HepG2 (cell line): ENCODE measurements at regions of chr9 and their contacts with region 1.

Region 1: DNA sequence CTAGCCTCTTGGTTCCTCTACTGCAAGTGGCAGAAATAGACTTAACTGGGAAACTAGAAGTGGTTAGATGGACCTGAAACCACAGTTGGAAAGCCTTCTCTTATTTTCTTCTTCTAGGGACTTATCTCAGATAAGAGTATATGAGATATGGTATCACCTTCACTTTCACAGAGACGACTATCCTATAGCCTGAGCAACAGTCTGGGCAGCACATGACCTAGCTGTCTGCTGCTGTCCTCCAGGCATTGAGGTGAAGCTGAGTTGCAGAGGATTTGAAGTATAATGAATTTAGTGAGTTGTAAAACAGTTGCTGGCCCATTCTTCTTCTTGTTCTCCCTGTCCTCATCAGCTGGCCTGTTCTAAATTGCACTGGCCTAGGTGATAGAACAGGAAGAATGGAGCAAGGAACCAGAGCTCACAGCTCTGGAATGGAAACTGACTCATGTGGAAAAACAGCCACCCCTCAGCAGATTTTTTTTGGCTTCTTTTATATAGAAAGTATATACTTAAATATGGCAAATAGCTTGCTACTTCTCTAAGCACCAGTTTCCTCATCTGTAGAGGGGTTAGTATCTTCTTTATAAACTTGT is 27.8 kb downstream of the RECK start:
- DNase-seq: no peak
- ATAC-seq: no peak
- H3K4me3 ChIP-seq: no peak overlapping the region
- H3K27ac ChIP-seq: no peak overlapping the region
- H3K4me1 ChIP-seq: no peaks in the 10 kb centered on the region
- H3K27me3 ChIP-seq: no peaks in the 10 kb centered on the region
- CTCF ChIP-seq: no peak
- EP300 ChIP-seq: no peak
- POLR2A ChIP-seq: no peak
- RAD21 ChIP-seq: no peak

Region 2: GRCh38 chr9:36008774-36009300 is 55.7 kb before region 1 on chr9:
- CTCF ChIA-PET with region 1: no interaction called
- POLR2A ChIA-PET with region 1: no interaction called
- in situ Hi-C with region 1: loop called (anchors 10 kb)
- intact Hi-C with region 1: no loop called
- DNase-seq: peak; percentile 74
- ATAC-seq: peak; percentile 97
- H3K4me3 ChIP-seq: no peak overlapping the region
- H3K27ac ChIP-seq: no peak overlapping the region
- H3K4me1 ChIP-seq: peaks cover 4% of the 10 kb centered on the region; the same call in 1 of the 2 replicates
- H3K27me3 ChIP-seq: peaks cover 0 to 2% of the 10 kb centered on the region in 2 experiments; a peak in 1 of 5 replicates
- CTCF ChIP-seq: peak; percentile 97
- EP300 ChIP-seq: no peak
- POLR2A ChIP-seq: no peak
- RAD21 ChIP-seq: peak; percentile 73

Region 3: DNA sequence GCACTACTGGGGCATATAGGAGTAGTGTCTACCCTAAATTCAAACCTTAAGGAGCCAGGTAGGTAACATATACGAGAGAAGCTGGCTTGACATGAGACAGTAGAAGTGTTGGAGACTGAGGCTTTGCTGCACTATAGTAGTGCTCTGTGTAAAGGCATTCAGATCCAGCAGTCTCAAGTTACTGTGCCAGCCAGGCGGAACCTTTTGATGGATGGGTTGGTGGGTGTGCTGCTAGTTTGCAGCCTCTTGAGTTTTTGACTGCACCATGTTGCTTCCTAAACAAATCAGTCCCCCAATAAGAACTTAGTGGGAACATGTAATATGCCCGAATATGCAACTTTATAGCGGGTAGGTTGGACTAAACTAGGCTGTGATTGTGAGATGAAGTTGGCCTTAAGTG is 127.7 kb after region 1 on chr9:
- CTCF ChIA-PET with region 1: no interaction called
- POLR2A ChIA-PET with region 1: no interaction called
- in situ Hi-C with region 1: no loop called
- intact Hi-C with region 1: no loop called
- DNase-seq: no peak
- ATAC-seq: no peak
- H3K4me3 ChIP-seq: peak overlapping the region; percentile 84 to 86 (median 85)
- H3K27ac ChIP-seq: no peak overlapping the region
- H3K4me1 ChIP-seq: peaks cover 36% of the 10 kb centered on the region
- H3K27me3 ChIP-seq: no peaks in the 10 kb centered on the region; a peak in 1 of 5 replicates
- CTCF ChIP-seq: no peak
- EP300 ChIP-seq: no peak
- POLR2A ChIP-seq: no peak
- RAD21 ChIP-seq: no peak